ENCODE measurements at regions of chr20 and their contacts with region 1.

Region 1: DNA sequence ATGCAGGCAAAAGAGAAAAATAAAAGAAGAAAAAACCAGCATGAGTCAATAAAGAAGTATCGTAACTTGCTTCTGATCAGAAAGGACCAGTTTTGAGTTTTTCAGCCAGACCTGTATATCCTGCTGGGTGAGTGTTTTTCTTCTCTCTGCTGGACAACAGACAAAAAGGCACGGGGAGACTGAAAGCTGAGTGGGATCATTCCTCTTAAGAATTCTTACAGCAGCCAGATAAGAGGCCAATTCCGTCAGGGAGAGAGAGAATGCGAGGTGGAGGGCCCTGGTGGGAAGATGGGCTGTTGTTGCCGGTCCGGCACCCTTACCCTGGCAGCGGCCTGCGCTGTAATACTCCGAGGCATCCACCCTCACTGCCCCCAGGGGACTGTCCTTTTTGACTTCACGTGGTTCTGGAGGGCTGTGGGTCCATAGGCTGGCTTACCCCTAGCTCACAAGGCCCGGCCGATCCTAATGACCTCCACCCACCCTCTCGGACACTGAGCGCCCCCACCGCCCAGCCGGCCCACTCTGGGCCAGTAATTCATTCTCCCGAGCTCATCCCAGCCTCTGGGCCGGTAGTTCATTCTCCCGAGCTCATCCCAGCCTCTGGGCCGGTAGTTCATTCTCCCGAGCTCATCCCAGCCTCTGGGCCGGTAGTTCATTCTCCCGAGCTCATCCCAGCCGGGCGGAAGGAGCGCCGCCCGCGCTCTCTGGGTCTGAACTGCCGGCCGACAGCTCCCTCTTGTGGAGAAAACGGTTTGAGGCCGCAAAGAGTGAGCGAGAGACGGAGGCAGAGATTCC is 118.3 kb upstream of the SIRPA start:
- DNase-seq: peak; percentile 63 to 80 (median 75)
- H3K4me3 ChIP-seq: peak overlapping the region; percentile 69 to 76
- H3K4me3 Mint-ChIP-seq: peak overlapping the region; percentile 72 to 94 (median 86)
- H3K27ac ChIP-seq: peak overlapping the region; percentile 40
- H3K27ac Mint-ChIP-seq: peak overlapping the region in 5 of 7 donors; percentile 15 to 92 (median 55)
- H3K4me1 ChIP-seq: peaks cover 14% of the 10 kb centered on the region
- H3K4me1 Mint-ChIP-seq: peaks cover 12 to 20% (median 15%) of the 10 kb centered on the region in 4 donors
- H3K27me3 ChIP-seq: no peaks in the 10 kb centered on the region
- H3K27me3 Mint-ChIP-seq: peaks cover 7 to 15% of the 10 kb centered on the region in 2 donors

Region 2: DNA sequence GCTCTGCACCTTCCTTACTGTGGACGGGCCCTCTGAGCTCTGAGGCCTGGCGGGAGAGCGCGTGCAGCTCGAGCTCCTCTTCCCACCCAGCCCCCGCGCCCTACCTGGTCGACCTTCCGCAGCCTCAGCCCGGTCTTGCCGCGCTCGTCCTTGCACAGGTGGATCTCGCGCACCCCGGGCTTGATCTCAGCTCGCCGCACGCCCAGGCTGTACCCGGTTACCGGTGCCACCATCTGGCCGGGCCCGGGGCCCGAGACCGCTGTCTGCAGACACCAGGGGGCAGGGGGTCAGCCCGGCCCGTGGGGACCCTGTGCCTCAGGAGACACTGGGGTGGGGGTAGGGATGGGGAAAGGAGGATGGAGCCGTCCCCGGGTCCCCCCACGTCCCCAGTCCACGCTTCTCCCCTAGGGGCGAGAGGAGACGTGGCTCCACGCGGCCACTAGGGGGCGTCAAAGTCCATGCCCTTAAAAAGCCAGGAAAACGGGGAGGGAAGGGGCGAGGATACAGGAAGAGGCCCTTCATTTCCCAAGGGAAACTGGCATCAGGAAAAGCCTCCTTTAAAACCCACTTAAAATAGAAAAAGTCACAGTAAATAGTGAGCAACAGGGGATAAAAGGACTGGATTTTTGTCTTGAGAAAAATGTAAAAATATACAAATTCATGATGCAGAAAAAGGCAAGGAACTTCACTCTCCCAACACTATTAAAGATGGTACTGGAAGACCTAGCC is 463.5 kb before region 1 on chr20:
- CTCF ChIA-PET with region 1: interaction called, 4 read pairs
- POLR2A ChIA-PET with region 1: no interaction called
- intact Hi-C with region 1: loop called (anchors 5 kb)
- DNase-seq: peak; percentile 54 to 59 (median 54)
- H3K4me3 ChIP-seq: no peak overlapping the region
- H3K4me3 Mint-ChIP-seq: no peak overlapping the region
- H3K27ac ChIP-seq: no peak overlapping the region
- H3K27ac Mint-ChIP-seq: peak overlapping the region in 1 of 7 donors; percentile 54
- H3K4me1 ChIP-seq: peaks cover 8% of the 10 kb centered on the region
- H3K4me1 Mint-ChIP-seq: peaks cover 4 to 10% (median 7%) of the 10 kb centered on the region in 4 donors
- H3K27me3 ChIP-seq: no peaks in the 10 kb centered on the region
- H3K27me3 Mint-ChIP-seq: no peaks in the 10 kb centered on the region

Region 3: DNA sequence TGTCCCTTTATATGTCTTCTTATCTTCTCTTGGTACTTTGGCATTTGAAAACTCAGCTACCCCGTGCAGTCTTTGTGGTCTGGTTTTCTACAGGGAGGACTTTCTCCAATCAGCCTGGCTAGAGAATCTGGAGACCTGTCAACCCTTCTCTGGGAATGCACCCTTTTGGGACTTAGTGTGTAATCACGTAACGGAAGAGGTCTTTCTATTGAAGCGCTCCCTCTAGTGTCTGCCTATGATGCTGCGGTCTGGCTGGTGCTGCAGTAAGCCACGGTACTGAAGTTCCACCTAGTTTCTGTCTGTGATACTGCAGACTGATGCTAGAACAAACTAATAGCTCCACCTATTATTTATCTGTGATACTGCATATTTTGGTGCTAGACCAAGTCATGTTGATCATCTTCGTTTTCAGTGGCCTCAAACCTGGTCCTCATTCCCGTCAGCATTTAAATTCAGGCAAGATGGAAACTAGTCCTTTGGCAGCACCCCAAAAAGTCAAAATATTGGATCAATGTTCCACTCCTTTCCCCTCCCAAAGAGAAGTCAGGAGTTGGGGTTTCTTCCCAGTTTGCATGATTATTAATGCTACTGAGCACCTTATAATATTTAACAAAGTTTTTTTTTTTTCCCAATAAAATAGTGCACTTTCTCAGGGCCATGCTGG is 273.2 kb before region 1 on chr20:
- CTCF ChIA-PET with region 1: interaction called, 45 read pairs
- POLR2A ChIA-PET with region 1: no interaction called
- intact Hi-C with region 1: no loop called
- DNase-seq: peak; percentile 76 to 83 (median 76)
- H3K4me3 ChIP-seq: no peak overlapping the region
- H3K4me3 Mint-ChIP-seq: no peak overlapping the region
- H3K27ac ChIP-seq: no peak overlapping the region
- H3K27ac Mint-ChIP-seq: peak overlapping the region in 1 of 7 donors; percentile 70
- H3K4me1 ChIP-seq: peaks cover 3% of the 10 kb centered on the region
- H3K4me1 Mint-ChIP-seq: peaks cover 3 to 6% (median 4%) of the 10 kb centered on the region in 4 donors
- H3K27me3 ChIP-seq: peaks cover 6% of the 10 kb centered on the region
- H3K27me3 Mint-ChIP-seq: peaks cover 25 to 35% of the 10 kb centered on the region in 2 donors

Region 4: DNA sequence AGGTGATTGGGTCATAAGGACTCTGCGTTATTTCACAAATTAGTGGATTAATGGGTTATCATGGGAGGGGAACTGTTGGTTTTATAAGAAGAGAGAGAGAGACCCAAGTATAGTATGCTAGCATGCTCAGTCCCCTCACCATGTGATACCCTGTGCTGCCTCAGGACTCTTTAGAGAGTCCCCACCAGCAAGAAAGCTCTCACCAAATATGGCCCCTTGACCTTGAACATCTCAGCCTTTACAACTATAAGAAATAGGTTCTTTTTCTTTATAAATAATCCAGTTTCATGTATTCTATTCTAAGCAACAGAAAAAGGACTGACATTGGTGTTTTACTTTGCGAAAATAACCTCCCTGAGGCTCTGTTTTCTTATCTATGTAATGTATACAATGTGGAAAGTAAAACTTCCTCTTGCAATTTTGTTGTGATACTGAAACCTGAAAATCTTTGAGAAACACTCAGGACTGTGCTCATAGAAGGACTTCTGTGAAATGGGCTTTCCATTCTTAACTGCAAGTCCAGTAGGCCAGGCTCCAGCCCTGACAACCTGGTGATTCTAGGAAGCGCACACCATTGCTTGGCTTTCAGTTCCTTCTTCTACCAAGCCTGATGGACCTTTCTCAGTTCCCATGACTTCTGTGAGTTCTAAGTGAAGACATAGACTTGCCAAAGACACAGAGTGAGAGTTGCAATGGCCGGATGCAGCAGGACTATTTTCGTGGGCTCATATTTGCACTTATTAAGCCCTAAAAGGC is 241.3 kb before region 1 on chr20:
- CTCF ChIA-PET with region 1: interaction called, 21 read pairs
- POLR2A ChIA-PET with region 1: no interaction called
- intact Hi-C with region 1: no loop called
- DNase-seq: no peak
- H3K4me3 ChIP-seq: no peak overlapping the region
- H3K4me3 Mint-ChIP-seq: no peak overlapping the region
- H3K27ac ChIP-seq: no peak overlapping the region
- H3K27ac Mint-ChIP-seq: no peak overlapping the region
- H3K4me1 ChIP-seq: no peaks in the 10 kb centered on the region
- H3K4me1 Mint-ChIP-seq: peaks cover 0 to 6% (median 4%) of the 10 kb centered on the region in 4 donors
- H3K27me3 ChIP-seq: no peaks in the 10 kb centered on the region
- H3K27me3 Mint-ChIP-seq: peaks cover 0 to 1% of the 10 kb centered on the region in 2 donors

Region 5: DNA sequence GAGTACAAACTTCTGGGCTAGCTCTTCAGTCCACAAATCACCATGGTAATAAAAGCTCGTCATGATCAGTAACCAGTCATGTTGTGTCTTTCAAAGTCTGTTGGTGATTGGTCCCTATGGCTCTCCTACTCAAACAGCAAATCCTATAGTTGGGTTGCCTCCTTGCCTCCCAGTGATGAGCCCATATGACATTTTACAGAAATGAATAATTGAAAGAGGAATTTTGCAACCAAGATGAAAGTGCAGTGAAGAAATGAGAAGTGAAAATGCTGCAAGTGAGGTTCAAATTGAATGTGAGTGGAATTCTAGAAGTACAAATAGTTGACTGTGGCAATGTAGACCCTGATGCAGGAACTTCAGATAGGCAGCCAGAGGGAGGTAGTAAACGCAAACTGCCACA is 214.3 kb before region 1 on chr20:
- CTCF ChIA-PET with region 1: interaction called, 55 read pairs
- POLR2A ChIA-PET with region 1: no interaction called
- intact Hi-C with region 1: no loop called
- DNase-seq: no peak
- H3K4me3 ChIP-seq: no peak overlapping the region
- H3K4me3 Mint-ChIP-seq: no peak overlapping the region
- H3K27ac ChIP-seq: no peak overlapping the region
- H3K27ac Mint-ChIP-seq: no peak overlapping the region
- H3K4me1 ChIP-seq: no peaks in the 10 kb centered on the region
- H3K4me1 Mint-ChIP-seq: peaks cover 0 to 4% (median 0%) of the 10 kb centered on the region in 4 donors
- H3K27me3 ChIP-seq: no peaks in the 10 kb centered on the region
- H3K27me3 Mint-ChIP-seq: no peaks in the 10 kb centered on the region

Region 6: DNA sequence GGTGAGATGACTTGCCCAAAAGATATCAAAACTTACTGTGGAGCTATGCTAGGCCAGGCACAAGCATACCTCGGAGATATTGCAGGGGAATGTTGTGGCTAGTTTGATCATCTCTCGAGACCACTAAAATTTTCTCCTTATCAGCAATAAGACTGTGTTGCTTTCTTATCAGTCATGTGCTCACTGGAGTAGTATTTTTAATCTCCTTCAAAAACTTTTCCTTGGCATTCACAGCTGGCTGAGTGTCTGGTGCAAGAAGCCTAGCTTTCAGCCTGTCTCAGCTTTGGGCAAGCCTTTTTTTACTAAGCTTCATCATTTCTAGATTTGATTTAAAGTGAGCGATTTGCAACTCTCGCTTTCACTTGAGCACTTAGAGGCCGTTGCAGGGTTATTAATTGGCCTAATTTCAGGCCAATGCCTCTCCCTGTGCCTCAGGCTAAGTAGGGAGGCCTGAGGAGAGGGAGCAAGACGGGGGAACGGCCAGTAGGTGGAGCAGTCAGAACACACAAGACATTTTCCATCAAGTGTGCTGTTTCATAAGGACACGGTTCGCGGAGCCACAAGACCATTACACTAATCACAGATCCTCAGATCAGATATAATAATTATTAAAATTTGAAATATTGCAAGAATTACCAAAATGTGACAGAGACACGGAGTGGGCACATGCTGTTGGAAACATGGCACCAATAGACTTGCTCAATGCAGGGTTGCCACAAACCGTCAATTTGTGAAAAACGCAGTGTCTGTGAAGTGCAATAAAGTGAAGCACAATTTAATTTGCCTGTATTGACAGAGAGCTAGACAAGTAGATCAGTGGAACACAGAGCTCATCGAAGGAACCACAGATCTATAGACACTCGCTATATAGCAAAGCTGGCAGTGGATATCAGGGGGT is 12.5 kb before region 1 on chr20:
- CTCF ChIA-PET with region 1: interaction called, 96 read pairs
- POLR2A ChIA-PET with region 1: interaction called, 4 read pairs
- intact Hi-C with region 1: loop called (anchors 1 kb)
- DNase-seq: peak in 4 of 5 donors; percentile 32 to 39 (median 34)
- H3K4me3 ChIP-seq: no peak overlapping the region
- H3K4me3 Mint-ChIP-seq: no peak overlapping the region
- H3K27ac ChIP-seq: no peak overlapping the region
- H3K27ac Mint-ChIP-seq: peak overlapping the region in 1 of 7 donors; percentile 26
- H3K4me1 ChIP-seq: no peaks in the 10 kb centered on the region
- H3K4me1 Mint-ChIP-seq: peaks cover 0 to 2% (median under 1%) of the 10 kb centered on the region in 4 donors
- H3K27me3 ChIP-seq: no peaks in the 10 kb centered on the region
- H3K27me3 Mint-ChIP-seq: peaks cover 0 to 3% of the 10 kb centered on the region in 2 donors